MCF 10A (cell line): ENCODE measurements at regions of chr12 and their contacts with region 1.

Region 1: DNA sequence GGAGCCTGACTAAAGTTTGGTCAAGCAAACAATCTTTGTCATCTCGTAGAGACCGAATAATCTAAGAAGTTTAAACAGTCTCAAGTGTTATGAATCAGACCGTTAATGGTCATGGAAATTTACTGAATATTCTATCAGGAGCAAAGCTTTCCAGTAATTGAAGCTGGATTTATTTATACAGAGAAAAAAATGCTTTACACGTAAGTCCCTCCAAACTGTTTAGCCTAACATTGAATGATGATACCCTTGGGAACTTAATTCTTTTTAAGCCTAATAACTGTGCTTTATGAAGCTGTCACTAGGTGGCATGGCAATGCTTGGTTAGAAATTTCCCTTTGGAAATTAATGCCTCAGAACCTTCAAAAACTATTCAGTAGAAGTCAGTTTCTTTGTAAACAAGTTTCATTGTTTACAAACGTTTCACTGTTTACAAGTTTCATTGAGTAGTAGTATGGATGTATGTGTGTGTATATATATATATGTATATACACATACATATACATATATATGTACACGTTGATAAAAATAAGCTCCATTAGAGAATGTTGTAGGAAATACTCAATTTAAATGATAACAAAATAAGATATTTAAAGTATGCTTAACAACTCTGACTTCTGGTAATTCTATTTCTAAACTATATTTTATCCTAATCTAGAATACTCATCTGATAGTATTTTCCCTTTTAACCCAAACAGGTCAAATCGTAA is 32.1 kb downstream of the DEPDC4 start:
- DNase-seq: peak; percentile 56
- H3K4me3 Mint-ChIP-seq: no peak overlapping the region
- H3K27ac Mint-ChIP-seq: no peak overlapping the region
- H3K4me1 Mint-ChIP-seq: peaks cover 6% of the 10 kb centered on the region
- H3K27me3 Mint-ChIP-seq: no peaks in the 10 kb centered on the region
- CTCF ChIP-seq: peak; percentile 60

Region 2: GRCh38 chr12:99658671-99659349 is 575.9 kb before region 1 on chr12:
- CTCF ChIA-PET with region 1: no interaction called
- POLR2A ChIA-PET with region 1: no interaction called
- intact Hi-C with region 1: no loop called
- DNase-seq: peak; percentile 6
- H3K4me3 Mint-ChIP-seq: no peak overlapping the region
- H3K27ac Mint-ChIP-seq: no peak overlapping the region
- H3K4me1 Mint-ChIP-seq: no peaks in the 10 kb centered on the region
- H3K27me3 Mint-ChIP-seq: no peaks in the 10 kb centered on the region
- CTCF ChIP-seq: peak; percentile 40

Region 3: GRCh38 chr12:100324498-100324897 is 89.7 kb after region 1 on chr12:
- CTCF ChIA-PET with region 1: interaction called, 10 read pairs
- POLR2A ChIA-PET with region 1: no interaction called
- intact Hi-C with region 1: no loop called
- DNase-seq: no peak
- H3K4me3 Mint-ChIP-seq: no peak overlapping the region
- H3K27ac Mint-ChIP-seq: no peak overlapping the region
- H3K4me1 Mint-ChIP-seq: no peaks in the 10 kb centered on the region
- H3K27me3 Mint-ChIP-seq: no peaks in the 10 kb centered on the region
- CTCF ChIP-seq: no peak

Region 4: GRCh38 chr12:100520048-100520769 is 285.5 kb after region 1 on chr12:
- CTCF ChIA-PET with region 1: no interaction called
- POLR2A ChIA-PET with region 1: no interaction called
- intact Hi-C with region 1: no loop called
- DNase-seq: no peak
- H3K4me3 Mint-ChIP-seq: no peak overlapping the region
- H3K27ac Mint-ChIP-seq: no peak overlapping the region
- H3K4me1 Mint-ChIP-seq: no peaks in the 10 kb centered on the region
- H3K27me3 Mint-ChIP-seq: peaks cover 29% of the 10 kb centered on the region
- CTCF ChIP-seq: no peak